ENCODE measurements at regions of chr6 and their contacts with region 1.

Region 1: GRCh38 chr6:10411971-10412745 is 2.7 kb downstream of the TFAP2A start:
- DNase-seq: peak; percentile 57
- ATAC-seq: peak; percentile 69
- H3K4me3 Mint-ChIP-seq: peak overlapping the region; percentile 81
- H3K27ac Mint-ChIP-seq: peak overlapping the region; percentile 52
- H3K4me1 Mint-ChIP-seq: peaks cover 37% of the 10 kb centered on the region
- H3K27me3 Mint-ChIP-seq: peaks cover 86% of the 10 kb centered on the region
- CTCF ChIP-seq: no peak

Region 2: GRCh38 chr6:10555625-10556309 is 143.6 kb after region 1 on chr6:
- CTCF ChIA-PET with region 1: no interaction called
- POLR2A ChIA-PET with region 1: no interaction called
- intact Hi-C with region 1: no loop called
- DNase-seq: no peak
- ATAC-seq: no peak
- H3K4me3 Mint-ChIP-seq: no peak overlapping the region
- H3K27ac Mint-ChIP-seq: no peak overlapping the region
- H3K4me1 Mint-ChIP-seq: no peaks in the 10 kb centered on the region
- H3K27me3 Mint-ChIP-seq: no peaks in the 10 kb centered on the region
- CTCF ChIP-seq: no peak

Region 3: GRCh38 chr6:10655508-10656055 is 243.4 kb after region 1 on chr6:
- CTCF ChIA-PET with region 1: no interaction called
- POLR2A ChIA-PET with region 1: no interaction called
- intact Hi-C with region 1: no loop called
- DNase-seq: peak; percentile 64
- ATAC-seq: peak; percentile 91
- H3K4me3 Mint-ChIP-seq: peak overlapping the region; percentile 13
- H3K27ac Mint-ChIP-seq: peak overlapping the region; percentile 22
- H3K4me1 Mint-ChIP-seq: peaks cover 16% of the 10 kb centered on the region
- H3K27me3 Mint-ChIP-seq: peaks cover 16% of the 10 kb centered on the region
- CTCF ChIP-seq: no peak

Region 4: GRCh38 chr6:10886691-10887535 is 474.8 kb after region 1 on chr6 and contains the start of gene SYCP2L:
- CTCF ChIA-PET with region 1: no interaction called
- POLR2A ChIA-PET with region 1: no interaction called
- intact Hi-C with region 1: loop called (anchors 10 kb)
- DNase-seq: peak; percentile 26
- ATAC-seq: peak; percentile 55
- H3K4me3 Mint-ChIP-seq: peak within 1 kb of the TSS; percentile 58
- H3K27ac Mint-ChIP-seq: no peak within 1 kb of the TSS
- H3K4me1 Mint-ChIP-seq: peaks cover 11% of the 10 kb centered on the region
- H3K27me3 Mint-ChIP-seq: peaks cover 69% of the 10 kb centered on the region
- CTCF ChIP-seq: no peak
- total RNA-seq, gene SYCP2L: 0.32 TPM in 1 of 2 experiments, not detected in the other

Measured in activated CD8-positive, alpha-beta T cell treated with anti-CD3 and anti-CD28 coated beads for 36 hours (primary cell).